ENCODE measurements at regions of chr9 and their contacts with region 1.

Region 1: GRCh38 chr9:73183917-73184861 is 32.5 kb downstream of the ANXA1 start:
- DNase-seq: no peak
- H3K4me3 ChIP-seq: no peak overlapping the region
- H3K27ac ChIP-seq: no peak overlapping the region
- H3K4me1 ChIP-seq: peaks cover 0 to 18% (median 0%) of the 10 kb centered on the region in 3 donors
- H3K27me3 ChIP-seq: no peaks in the 10 kb centered on the region
- CTCF ChIP-seq: peak in 5 of 6 experiments; percentile 31 to 64 (median 50)
- POLR2A ChIP-seq: no peak

Region 2: GRCh38 chr9:73095425-73095824 is 88.8 kb before region 1 on chr9:
- intact Hi-C with region 1: loop called (anchors 5 kb)
- DNase-seq: no peak
- H3K4me3 ChIP-seq: no peak overlapping the region
- H3K27ac ChIP-seq: no peak overlapping the region
- H3K4me1 ChIP-seq: peaks cover 0 to 8% (median 6%) of the 10 kb centered on the region in 3 donors
- H3K27me3 ChIP-seq: no peaks in the 10 kb centered on the region
- CTCF ChIP-seq: no peak
- POLR2A ChIP-seq: no peak

Region 3: GRCh38 chr9:73104921-73105320 is 79.3 kb before region 1 on chr9:
- intact Hi-C with region 1: loop called (anchors 5 kb)
- DNase-seq: no peak
- H3K4me3 ChIP-seq: no peak overlapping the region
- H3K27ac ChIP-seq: no peak overlapping the region
- H3K4me1 ChIP-seq: peaks cover 0 to 14% (median 0%) of the 10 kb centered on the region in 3 donors
- H3K27me3 ChIP-seq: no peaks in the 10 kb centered on the region
- CTCF ChIP-seq: no peak
- POLR2A ChIP-seq: no peak

Region 4: DNA sequence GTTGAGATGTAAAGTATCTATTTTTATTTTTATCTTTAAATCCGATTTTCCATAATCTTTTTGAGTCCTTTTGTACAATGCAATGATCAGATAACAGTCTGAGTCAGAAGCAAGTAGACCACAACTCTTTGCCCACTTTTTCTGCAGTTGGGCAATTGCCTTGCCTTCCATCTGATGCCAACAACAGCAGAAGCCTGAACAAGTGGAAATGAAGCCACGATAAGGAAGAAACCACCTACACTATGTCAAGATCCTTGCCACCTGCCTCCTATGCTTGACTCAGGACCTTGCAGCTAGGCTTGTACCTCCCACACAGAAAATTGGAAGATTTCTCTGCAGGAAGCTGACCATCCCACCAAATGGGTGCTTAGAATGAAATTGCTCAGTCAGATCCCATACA is 46.1 kb after region 1 on chr9:
- intact Hi-C with region 1: no loop called
- DNase-seq: no peak
- H3K4me3 ChIP-seq: no peak overlapping the region
- H3K27ac ChIP-seq: no peak overlapping the region
- H3K4me1 ChIP-seq: no peaks in the 10 kb centered on the region
- H3K27me3 ChIP-seq: peaks cover 0 to 5% (median 0%) of the 10 kb centered on the region in 4 donors
- CTCF ChIP-seq: no peak
- POLR2A ChIP-seq: no peak

Region 5: DNA sequence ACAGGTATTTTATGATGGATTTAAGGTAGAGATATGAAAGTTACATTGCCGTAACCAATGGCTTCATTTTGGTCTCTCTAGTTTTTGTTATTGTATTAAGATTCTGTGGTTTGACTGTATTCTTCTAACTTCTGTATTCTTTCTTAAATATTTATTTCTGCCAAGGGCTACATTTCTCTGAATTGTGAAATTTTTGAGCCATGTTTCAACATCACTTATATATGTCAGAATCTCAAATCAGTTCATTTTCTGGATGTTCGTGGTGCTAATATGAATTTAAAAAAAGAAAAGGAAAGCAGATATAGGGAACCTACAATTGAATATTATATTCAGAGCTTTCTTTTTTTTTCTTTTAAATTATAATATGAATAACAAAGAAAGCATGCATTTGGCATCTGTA is 110.1 kb after region 1 on chr9:
- intact Hi-C with region 1: no loop called
- DNase-seq: no peak
- H3K4me3 ChIP-seq: no peak overlapping the region
- H3K27ac ChIP-seq: no peak overlapping the region
- H3K4me1 ChIP-seq: no peaks in the 10 kb centered on the region
- H3K27me3 ChIP-seq: no peaks in the 10 kb centered on the region
- CTCF ChIP-seq: no peak
- POLR2A ChIP-seq: no peak

Region 6: GRCh38 chr9:73411494-73411893 is 227.3 kb after region 1 on chr9:
- intact Hi-C with region 1: no loop called
- DNase-seq: no peak
- H3K4me3 ChIP-seq: no peak overlapping the region
- H3K27ac ChIP-seq: no peak overlapping the region
- H3K4me1 ChIP-seq: no peaks in the 10 kb centered on the region
- H3K27me3 ChIP-seq: no peaks in the 10 kb centered on the region
- CTCF ChIP-seq: no peak
- POLR2A ChIP-seq: no peak

Region 7: DNA sequence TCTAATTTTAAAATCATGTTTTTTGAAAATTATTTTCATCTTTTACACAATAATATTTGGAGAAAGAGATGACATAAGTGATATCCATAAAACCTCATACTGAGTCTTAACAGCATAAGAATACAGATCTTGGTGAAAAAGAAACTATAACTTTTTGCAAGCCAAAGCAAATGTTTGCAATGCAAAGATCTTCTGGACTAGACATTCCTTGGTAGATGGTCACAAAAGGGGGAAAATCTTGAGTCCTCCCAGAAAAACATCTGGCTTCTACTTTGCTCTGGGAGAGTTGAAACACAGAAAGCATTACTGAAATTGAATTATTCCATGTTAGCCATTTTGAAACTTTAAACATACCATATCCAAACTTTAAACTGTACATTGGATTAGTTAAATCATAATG is 275.6 kb after region 1 on chr9:
- intact Hi-C with region 1: no loop called
- DNase-seq: no peak
- H3K4me3 ChIP-seq: no peak overlapping the region
- H3K27ac ChIP-seq: no peak overlapping the region
- H3K4me1 ChIP-seq: no peaks in the 10 kb centered on the region
- H3K27me3 ChIP-seq: no peaks in the 10 kb centered on the region
- CTCF ChIP-seq: no peak
- POLR2A ChIP-seq: no peak